ENCODE measurements at regions of chr20 and their contacts with region 1.

Region 1: DNA sequence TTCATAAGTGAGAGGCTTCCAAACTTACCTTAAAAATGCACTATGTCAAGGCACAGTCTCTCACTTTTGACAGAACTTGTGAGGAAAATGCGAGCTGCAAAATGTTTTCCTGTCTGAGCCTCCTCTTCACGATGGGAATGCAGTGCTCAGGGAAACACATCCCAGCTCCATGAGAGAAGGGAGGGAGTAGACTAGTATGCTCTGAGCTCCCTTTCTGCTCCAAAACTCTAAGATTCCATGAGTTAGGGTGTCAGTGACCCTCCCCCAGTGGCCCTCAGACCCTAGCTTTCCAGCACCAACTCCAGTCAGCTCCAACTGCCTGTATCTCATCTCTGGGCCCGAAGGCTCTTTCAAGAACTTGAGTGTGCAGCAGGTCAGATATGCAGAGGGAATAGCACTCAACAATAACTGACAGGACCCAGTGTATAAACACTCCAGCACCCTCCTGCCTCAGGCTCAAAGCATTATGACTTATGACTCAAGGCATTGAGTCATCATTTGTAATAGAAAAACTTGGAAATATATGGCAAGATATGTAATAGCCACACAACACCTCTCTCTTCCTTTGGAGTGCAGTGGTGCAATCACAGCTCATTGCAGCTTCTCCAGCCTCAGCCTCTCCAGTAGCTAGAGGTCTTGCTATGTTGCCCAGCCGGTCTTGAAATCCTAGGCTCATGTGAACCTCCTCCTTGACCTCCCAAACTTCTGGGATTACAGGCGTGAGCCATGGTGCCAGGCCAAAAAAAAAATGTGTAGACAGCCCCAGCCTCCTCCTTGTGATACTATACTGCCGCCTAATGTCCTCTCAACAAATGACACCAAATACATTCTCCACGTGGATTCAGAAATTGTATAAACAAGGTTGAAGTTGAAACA is 16.7 kb upstream of the ENTPD6 start:
- DNase-seq: peak; percentile 14
- ATAC-seq: peak; percentile 74
- H3K4me3 Mint-ChIP-seq: no peak overlapping the region
- H3K27ac Mint-ChIP-seq: no peak overlapping the region
- H3K4me1 Mint-ChIP-seq: peaks cover 4% of the 10 kb centered on the region
- H3K27me3 Mint-ChIP-seq: peaks cover under 1% of the 10 kb centered on the region
- CTCF ChIP-seq: peak; percentile 81

Region 2: GRCh38 chr20:24992487-24993205 is 186.2 kb before region 1 on chr20 and contains the start of gene APMAP:
- CTCF ChIA-PET with region 1: interaction called, 11 read pairs
- POLR2A ChIA-PET with region 1: interaction called, 4 read pairs
- intact Hi-C with region 1: loop called (anchors 2 kb)
- DNase-seq: peak; percentile 98
- ATAC-seq: peak; percentile 95
- H3K4me3 Mint-ChIP-seq: peak within 1 kb of the TSS; percentile 97
- H3K27ac Mint-ChIP-seq: peak within 1 kb of the TSS; percentile 95
- H3K4me1 Mint-ChIP-seq: peaks cover 54% of the 10 kb centered on the region
- H3K27me3 Mint-ChIP-seq: no peaks in the 10 kb centered on the region
- CTCF ChIP-seq: no peak
- total RNA-seq, gene APMAP: 36.7 to 40.0 TPM

Region 3: GRCh38 chr20:25065625-25066338 is 113.0 kb before region 1 on chr20:
- CTCF ChIA-PET with region 1: interaction called, 10 read pairs
- POLR2A ChIA-PET with region 1: no interaction called
- intact Hi-C with region 1: no loop called
- DNase-seq: peak; percentile 83
- ATAC-seq: peak; percentile 65
- H3K4me3 Mint-ChIP-seq: no peak overlapping the region
- H3K27ac Mint-ChIP-seq: no peak overlapping the region
- H3K4me1 Mint-ChIP-seq: peaks cover 4% of the 10 kb centered on the region
- H3K27me3 Mint-ChIP-seq: peaks cover 15% of the 10 kb centered on the region
- CTCF ChIP-seq: peak; percentile 77

Region 4: DNA sequence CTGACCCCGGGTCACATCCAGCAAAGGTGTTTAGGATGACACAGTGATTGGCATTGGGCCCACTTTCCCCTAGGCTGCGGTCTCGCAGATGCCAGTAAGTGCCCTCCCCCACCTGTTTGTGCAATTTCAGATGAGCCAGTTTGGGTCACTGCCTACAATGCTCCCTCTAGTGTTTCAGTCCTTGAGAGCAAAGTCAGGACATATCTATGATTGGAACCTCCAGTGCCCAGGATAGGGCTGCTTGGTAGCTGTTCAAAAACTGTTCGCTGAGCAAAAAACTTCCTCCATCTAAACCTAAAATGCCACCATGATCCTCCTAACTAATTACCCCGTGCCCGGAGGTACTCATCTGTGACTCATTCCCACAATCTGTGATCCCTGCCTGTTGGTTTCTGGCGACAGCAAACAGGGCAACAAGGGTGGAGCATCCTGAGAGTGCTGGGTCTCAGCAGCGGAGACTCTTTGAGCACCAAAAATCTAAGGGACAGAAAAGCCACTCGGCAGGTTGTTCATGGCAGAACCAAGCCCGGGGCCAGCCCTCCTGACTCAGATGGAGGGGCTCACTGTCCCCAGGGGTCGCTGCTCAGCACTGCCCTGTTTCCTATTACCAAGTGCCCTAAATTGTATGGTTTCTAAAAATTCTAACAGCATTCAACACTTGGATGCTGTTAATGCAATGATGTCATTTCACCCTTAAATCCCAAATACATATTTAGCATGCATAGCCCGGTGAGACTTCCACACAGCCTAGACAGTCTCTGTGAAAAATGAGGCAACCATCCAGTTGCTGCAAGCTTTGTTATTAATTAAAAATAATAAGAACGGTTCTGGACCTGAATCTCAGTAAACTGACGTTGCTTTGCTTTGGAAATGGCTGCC is 101.8 kb before region 1 on chr20:
- CTCF ChIA-PET with region 1: interaction called, 6 read pairs
- POLR2A ChIA-PET with region 1: no interaction called
- intact Hi-C with region 1: loop called (anchors 5 kb)
- DNase-seq: peak; percentile 46
- ATAC-seq: peak; percentile 42
- H3K4me3 Mint-ChIP-seq: no peak overlapping the region
- H3K27ac Mint-ChIP-seq: no peak overlapping the region
- H3K4me1 Mint-ChIP-seq: peaks cover 9% of the 10 kb centered on the region
- H3K27me3 Mint-ChIP-seq: peaks cover 57% of the 10 kb centered on the region
- CTCF ChIP-seq: no peak

Region 5: GRCh38 chr20:25195014-25195961 is 16.5 kb after region 1 on chr20 and contains the start of gene ENTPD6:
- CTCF ChIA-PET with region 1: interaction called, 18 read pairs
- POLR2A ChIA-PET with region 1: no interaction called
- intact Hi-C with region 1: no loop called
- DNase-seq: peak; percentile 92
- ATAC-seq: peak; percentile 86
- H3K4me3 Mint-ChIP-seq: peak within 1 kb of the TSS; percentile 89
- H3K27ac Mint-ChIP-seq: peak within 1 kb of the TSS; percentile 82
- H3K4me1 Mint-ChIP-seq: peaks cover 32% of the 10 kb centered on the region
- H3K27me3 Mint-ChIP-seq: no peaks in the 10 kb centered on the region
- CTCF ChIP-seq: no peak
- total RNA-seq, gene ENTPD6: 39.4 to 42.8 TPM

Region 6: DNA sequence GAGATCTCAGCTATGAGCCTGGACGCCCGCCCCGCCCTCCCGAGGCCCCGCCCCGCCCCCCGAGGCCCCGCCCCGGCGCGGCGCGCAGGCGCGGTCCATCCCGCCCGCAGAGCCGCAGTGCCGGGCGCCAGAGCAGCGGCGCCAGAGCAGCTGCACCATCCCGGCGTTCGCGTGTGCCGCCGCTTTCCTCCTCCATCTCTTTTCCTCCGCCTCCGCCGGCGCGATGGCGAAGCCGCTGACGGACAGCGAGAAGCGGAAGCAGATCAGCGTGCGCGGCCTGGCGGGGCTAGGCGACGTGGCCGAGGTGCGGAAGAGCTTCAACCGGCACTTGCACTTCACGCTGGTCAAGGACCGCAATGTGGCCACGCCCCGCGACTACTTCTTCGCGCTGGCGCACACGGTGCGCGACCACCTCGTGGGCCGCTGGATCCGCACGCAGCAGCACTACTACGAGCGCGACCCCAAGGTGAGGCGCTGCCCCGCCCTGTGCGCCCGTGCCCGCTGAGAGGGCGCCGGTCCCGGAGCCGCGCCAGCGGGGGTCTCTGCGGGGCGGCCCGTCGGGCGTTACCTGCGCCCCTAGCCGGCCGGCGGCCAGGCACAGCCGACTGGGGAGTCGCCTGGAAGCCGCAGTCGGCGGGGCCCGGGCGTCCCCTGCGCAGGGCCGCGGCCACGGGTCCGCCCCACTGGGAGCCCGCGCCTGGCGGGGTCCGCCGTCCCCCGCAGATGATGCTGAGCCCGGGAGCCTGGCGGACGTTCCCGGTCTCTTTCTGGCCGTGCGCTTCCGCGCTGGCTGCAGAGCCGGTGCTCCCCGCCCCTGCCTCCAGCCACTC is 69.4 kb after region 1 on chr20 and contains the start of gene PYGB:
- CTCF ChIA-PET with region 1: no interaction called
- POLR2A ChIA-PET with region 1: no interaction called
- intact Hi-C with region 1: no loop called
- DNase-seq: peak; percentile 76
- ATAC-seq: peak; percentile 88
- H3K4me3 Mint-ChIP-seq: peak within 1 kb of the TSS; percentile 89
- H3K27ac Mint-ChIP-seq: peak within 1 kb of the TSS; percentile 91
- H3K4me1 Mint-ChIP-seq: peaks cover 53% of the 10 kb centered on the region
- H3K27me3 Mint-ChIP-seq: peaks cover 7% of the 10 kb centered on the region
- CTCF ChIP-seq: no peak
- total RNA-seq, gene PYGB: 26.1 to 26.5 TPM